ENCODE measurements at regions of chr22 and their contacts with region 1.

Region 1: GRCh38 chr22:43346521-43346929 is 3.4 kb upstream of the SCUBE1 start:
- DNase-seq: peak; percentile 9
- H3K4me3 ChIP-seq: no peak overlapping the region
- H3K27ac ChIP-seq: no peak overlapping the region
- H3K4me1 ChIP-seq: no peaks in the 10 kb centered on the region
- H3K27me3 ChIP-seq: peaks cover 18% of the 10 kb centered on the region
- CTCF ChIP-seq: peak; percentile 42 to 84

Region 2: GRCh38 chr22:43136255-43136654 is 210.3 kb before region 1 on chr22:
- CTCF ChIA-PET with region 1: no interaction called
- dilution Hi-C with region 1: no loop called
- in situ Hi-C with region 1: no loop called
- intact Hi-C with region 1: no loop called
- DNase-seq: no peak
- H3K4me3 ChIP-seq: no peak overlapping the region
- H3K27ac ChIP-seq: no peak overlapping the region
- H3K4me1 ChIP-seq: no peaks in the 10 kb centered on the region
- H3K27me3 ChIP-seq: no peaks in the 10 kb centered on the region
- CTCF ChIP-seq: peak; percentile 44 to 61

Region 3: DNA sequence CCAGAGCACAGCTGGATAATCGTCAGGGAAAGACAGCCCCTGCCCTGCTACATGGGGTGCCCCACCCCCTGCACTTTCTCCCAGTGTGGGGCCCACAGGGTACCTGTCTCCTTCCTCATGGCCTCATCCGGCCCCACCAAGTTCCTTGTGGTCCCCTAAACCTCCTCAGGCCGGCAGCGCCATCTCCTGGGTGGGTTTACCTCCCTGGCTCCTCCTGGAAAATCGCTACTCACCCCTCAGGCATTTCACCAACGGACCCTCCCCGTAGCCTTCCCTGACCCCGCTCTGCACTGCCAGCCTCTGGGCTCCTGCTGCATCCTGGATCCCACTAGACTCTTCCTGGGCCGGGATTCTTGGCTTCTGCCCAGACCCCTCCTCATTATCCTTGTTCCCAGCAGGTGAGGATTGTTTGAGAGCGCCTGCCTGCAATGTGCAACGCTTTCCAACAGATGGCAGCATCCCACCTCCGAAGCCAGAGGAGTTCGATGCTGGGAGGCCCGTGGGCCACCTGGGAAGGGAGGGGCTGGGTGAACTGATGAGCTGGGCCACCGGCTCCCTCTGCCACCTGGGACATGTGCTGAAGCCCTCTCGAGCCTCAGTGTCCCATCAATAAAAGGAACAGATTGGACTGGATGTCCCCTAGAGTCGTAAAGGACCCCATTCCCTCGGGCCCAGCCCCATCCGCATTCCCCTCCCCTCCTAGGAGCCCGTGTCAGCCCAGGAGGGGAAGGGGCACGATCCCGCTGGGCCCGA is 115.4 kb before region 1 on chr22:
- CTCF ChIA-PET with region 1: no interaction called
- dilution Hi-C with region 1: no loop called
- in situ Hi-C with region 1: no loop called
- intact Hi-C with region 1: loop called (anchors 1 kb)
- DNase-seq: peak; percentile 32
- H3K4me3 ChIP-seq: no peak overlapping the region
- H3K27ac ChIP-seq: no peak overlapping the region
- H3K4me1 ChIP-seq: no peaks in the 10 kb centered on the region
- H3K27me3 ChIP-seq: no peaks in the 10 kb centered on the region
- CTCF ChIP-seq: peak; percentile 86 to 91

Region 4: GRCh38 chr22:43273902-43274484 is 72.5 kb before region 1 on chr22:
- CTCF ChIA-PET with region 1: interaction called, 16 read pairs
- dilution Hi-C with region 1: no loop called
- in situ Hi-C with region 1: no loop called
- intact Hi-C with region 1: loop called (anchors 1 kb)
- DNase-seq: peak; percentile 41
- H3K4me3 ChIP-seq: no peak overlapping the region
- H3K27ac ChIP-seq: no peak overlapping the region
- H3K4me1 ChIP-seq: peaks cover 11% of the 10 kb centered on the region
- H3K27me3 ChIP-seq: peaks cover 2% of the 10 kb centered on the region
- CTCF ChIP-seq: peak; percentile 65 to 84

Region 5: DNA sequence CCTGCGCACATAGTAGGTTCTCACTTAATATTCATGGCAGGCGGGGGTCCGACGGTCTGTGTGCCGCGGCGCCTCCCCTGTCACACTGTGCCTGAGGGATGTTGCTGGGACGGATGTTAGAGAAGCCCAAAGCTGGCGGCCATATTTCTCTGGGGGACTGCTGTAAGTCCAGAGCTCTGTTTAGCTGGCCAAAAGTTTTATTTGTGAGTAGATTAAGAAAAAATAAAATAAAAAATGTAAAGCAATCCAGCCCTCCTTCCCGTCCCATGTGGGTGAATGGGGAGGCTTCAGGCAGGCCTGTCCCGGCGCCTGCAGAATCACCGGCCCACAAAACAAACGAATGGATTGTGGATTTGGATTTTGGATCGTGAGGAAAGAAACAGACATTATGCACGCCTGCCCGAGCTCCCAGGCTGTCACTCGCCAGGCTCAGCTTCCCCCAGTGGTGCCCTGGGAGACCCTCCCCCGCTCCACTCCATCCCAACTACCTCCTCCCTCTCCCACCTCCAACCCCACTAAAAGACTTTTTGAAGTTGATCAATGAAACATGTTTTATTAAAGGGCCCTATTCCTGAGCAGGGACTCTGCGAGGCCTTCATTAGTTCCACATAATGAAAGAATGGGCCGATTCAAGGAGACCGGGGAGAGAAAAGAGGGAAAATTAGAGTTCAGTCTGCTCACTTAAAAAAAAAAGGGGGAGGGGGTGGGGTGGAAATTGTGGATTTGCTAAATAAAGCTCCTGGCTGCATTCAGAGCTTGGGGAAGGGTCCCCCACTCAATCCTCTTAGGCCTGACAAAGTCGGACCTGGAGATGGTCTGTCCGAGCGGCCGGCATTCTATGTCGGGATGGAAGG is 17.0 kb after region 1 on chr22:
- CTCF ChIA-PET with region 1: no interaction called
- dilution Hi-C with region 1: no loop called
- in situ Hi-C with region 1: no loop called
- intact Hi-C with region 1: no loop called
- DNase-seq: no peak
- H3K4me3 ChIP-seq: no peak overlapping the region
- H3K27ac ChIP-seq: no peak overlapping the region
- H3K4me1 ChIP-seq: no peaks in the 10 kb centered on the region
- H3K27me3 ChIP-seq: peaks cover 4% of the 10 kb centered on the region
- CTCF ChIP-seq: no peak

Region 6: DNA sequence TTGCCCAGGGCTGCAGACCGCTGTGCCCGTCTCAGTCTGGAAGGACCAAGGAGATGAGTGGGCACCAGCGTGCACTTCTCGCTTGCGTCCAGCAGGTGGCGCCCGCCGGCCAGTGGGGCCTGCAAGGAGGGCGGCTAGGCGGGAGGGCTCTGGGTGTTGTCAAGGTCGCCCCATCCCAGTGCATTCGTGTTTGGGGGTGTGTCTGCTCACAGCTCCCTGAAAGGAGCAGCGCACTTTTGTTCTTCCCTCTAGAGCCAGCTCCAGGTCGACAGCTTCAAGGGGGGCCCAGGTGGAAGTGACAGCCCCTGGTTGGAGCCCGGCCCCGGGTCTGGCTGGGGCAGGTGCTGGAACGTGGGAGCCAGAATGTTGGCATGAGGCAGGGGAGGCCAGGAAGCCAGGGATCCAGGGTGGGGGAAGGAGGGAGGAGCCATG is 41.9 kb after region 1 on chr22:
- CTCF ChIA-PET with region 1: no interaction called
- dilution Hi-C with region 1: no loop called
- in situ Hi-C with region 1: no loop called
- intact Hi-C with region 1: no loop called
- DNase-seq: peak; percentile 36
- H3K4me3 ChIP-seq: no peak overlapping the region
- H3K27ac ChIP-seq: no peak overlapping the region
- H3K4me1 ChIP-seq: no peaks in the 10 kb centered on the region
- H3K27me3 ChIP-seq: no peaks in the 10 kb centered on the region
- CTCF ChIP-seq: peak; percentile 84 to 99

Region 7: GRCh38 chr22:43399338-43399979 is 52.9 kb after region 1 on chr22:
- CTCF ChIA-PET with region 1: interaction called, 12 read pairs
- dilution Hi-C with region 1: no loop called
- in situ Hi-C with region 1: no loop called
- intact Hi-C with region 1: no loop called
- DNase-seq: no peak
- H3K4me3 ChIP-seq: no peak overlapping the region
- H3K27ac ChIP-seq: no peak overlapping the region
- H3K4me1 ChIP-seq: peaks cover 3% of the 10 kb centered on the region
- H3K27me3 ChIP-seq: peaks cover 8% of the 10 kb centered on the region
- CTCF ChIP-seq: no peak

Measured in mammary epithelial cell (primary cell).